Breast epithelium (tissue), 4 donors: ENCODE measurements at regions of chr9 and their contacts with region 1.

Region 1: GRCh38 chr9:24041160-24041690 is 215.2 kb upstream of the ELAVL2 start:
- DNase-seq: no peak
- H3K4me3 ChIP-seq: no peak overlapping the region
- H3K27ac ChIP-seq: no peak overlapping the region
- H3K4me1 ChIP-seq: no peaks in the 10 kb centered on the region
- H3K27me3 ChIP-seq: no peaks in the 10 kb centered on the region
- CTCF ChIP-seq: no peak
- POLR2A ChIP-seq: no peak

Region 2: GRCh38 chr9:23567516-23568165 is 473.6 kb before region 1 on chr9:
- intact Hi-C with region 1: loop called (anchors 5 kb)
- DNase-seq: no peak
- H3K4me3 ChIP-seq: no peak overlapping the region
- H3K27ac ChIP-seq: no peak overlapping the region
- H3K4me1 ChIP-seq: no peaks in the 10 kb centered on the region
- H3K27me3 ChIP-seq: no peaks in the 10 kb centered on the region
- CTCF ChIP-seq: no peak
- POLR2A ChIP-seq: no peak

Region 3: GRCh38 chr9:24218656-24219055 is 177.4 kb after region 1 on chr9:
- intact Hi-C with region 1: loop called (anchors 10 kb)
- DNase-seq: no peak
- H3K4me3 ChIP-seq: no peak overlapping the region
- H3K27ac ChIP-seq: no peak overlapping the region
- H3K4me1 ChIP-seq: no peaks in the 10 kb centered on the region
- H3K27me3 ChIP-seq: no peaks in the 10 kb centered on the region
- CTCF ChIP-seq: no peak
- POLR2A ChIP-seq: no peak